H1 (cell line): ENCODE measurements at regions of chr2 and their contacts with region 1.

Region 1: GRCh38 chr2:121617042-121617599 is 32.1 kb downstream of the CLASP1 start:
- DNase-seq: no peak
- H3K4me3 ChIP-seq: no peak overlapping the region
- H3K27ac ChIP-seq: no peak overlapping the region
- H3K4me1 ChIP-seq: no peaks in the 10 kb centered on the region; a peak in 2 of 7 replicates
- H3K27me3 ChIP-seq: no peaks in the 10 kb centered on the region
- CTCF ChIP-seq: no peak
- EP300 ChIP-seq: no peak
- POLR2A ChIP-seq: no peak
- RAD21 ChIP-seq: no peak

Region 2: DNA sequence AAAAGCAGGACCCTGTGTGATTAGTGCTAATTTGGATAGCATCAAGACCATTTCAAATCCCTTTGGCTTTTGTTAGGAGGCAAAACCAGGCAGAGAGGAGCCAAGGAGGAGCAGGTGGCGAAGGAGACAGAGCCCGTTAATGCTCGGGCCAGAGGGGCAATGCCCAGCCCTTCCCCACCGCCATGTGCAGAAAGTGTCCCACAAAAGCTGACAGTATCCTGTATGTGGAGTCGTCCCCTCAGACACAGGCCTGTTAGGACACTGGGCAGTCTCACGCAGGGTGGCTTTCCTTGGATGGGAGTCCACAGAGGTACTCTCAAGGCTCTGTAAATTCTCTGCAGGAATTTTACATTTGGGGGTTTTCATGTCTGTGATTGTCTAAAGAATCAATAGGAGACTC is 287.3 kb before region 1 on chr2:
- CTCF ChIA-PET with region 1: no interaction called
- POLR2A ChIA-PET with region 1: no interaction called
- DNase-seq: no peak
- H3K4me3 ChIP-seq: no peak overlapping the region
- H3K27ac ChIP-seq: no peak overlapping the region
- H3K4me1 ChIP-seq: peaks cover 0 to 3% (median 1%) of the 10 kb centered on the region in 4 experiments; a peak in 2 of 7 replicates
- H3K27me3 ChIP-seq: no peaks in the 10 kb centered on the region
- CTCF ChIP-seq: no peak
- EP300 ChIP-seq: no peak
- POLR2A ChIP-seq: no peak
- RAD21 ChIP-seq: no peak

Region 3: GRCh38 chr2:121501031-121501430 is 116.1 kb before region 1 on chr2:
- CTCF ChIA-PET with region 1: no interaction called
- POLR2A ChIA-PET with region 1: no interaction called
- DNase-seq: no peak
- H3K4me3 ChIP-seq: no peak overlapping the region
- H3K27ac ChIP-seq: no peak overlapping the region
- H3K4me1 ChIP-seq: peaks cover 0 to 2% (median under 1%) of the 10 kb centered on the region in 4 experiments; a peak in 2 of 7 replicates
- H3K27me3 ChIP-seq: no peaks in the 10 kb centered on the region
- CTCF ChIP-seq: no peak
- EP300 ChIP-seq: no peak
- POLR2A ChIP-seq: no peak
- RAD21 ChIP-seq: no peak

Region 4: DNA sequence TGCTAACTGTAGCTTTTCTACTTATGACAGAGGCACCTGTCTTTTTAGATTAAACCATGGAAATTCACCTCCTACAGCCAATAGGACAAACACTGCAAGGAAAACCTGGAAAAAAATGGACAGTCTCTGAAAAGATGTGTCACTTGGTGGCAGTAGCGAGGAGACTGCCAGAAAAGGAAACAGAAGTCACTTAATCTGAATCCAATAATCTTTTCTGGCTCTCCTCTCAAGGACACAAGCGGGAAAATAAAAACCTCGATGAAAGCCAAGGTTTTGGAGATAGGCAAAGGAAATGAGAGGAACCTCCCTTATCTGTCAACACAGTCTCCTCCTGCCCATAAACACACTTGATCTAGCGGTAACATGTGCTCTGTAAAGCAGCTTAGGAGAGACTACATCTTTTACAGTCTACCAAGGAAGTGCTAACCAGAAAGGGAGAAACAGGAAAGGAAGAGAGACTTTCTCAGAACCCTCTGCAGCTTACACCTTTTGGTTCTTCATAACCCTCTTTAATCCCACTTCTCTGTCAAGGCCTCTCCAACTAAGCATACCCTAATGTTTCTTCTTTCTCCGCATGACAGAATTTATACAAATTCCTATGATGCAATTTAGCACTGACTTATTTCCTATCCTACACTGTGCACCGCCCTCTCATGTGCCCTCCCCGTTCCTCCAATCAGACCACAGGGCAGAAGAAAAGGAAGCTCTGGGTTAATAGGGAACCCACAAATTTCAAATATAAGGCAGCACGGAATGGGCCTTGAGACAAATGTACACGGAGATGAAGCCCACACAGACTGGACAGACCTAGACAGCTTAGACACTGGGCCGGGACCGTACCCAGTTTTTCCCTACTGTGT is 20.7 kb before region 1 on chr2:
- CTCF ChIA-PET with region 1: interaction called, 11 read pairs
- POLR2A ChIA-PET with region 1: interaction called, 3 read pairs
- DNase-seq: no peak
- H3K4me3 ChIP-seq: no peak overlapping the region
- H3K27ac ChIP-seq: no peak overlapping the region
- H3K4me1 ChIP-seq: peaks cover 0 to 3% (median 0%) of the 10 kb centered on the region in 4 experiments; a peak in 1 of 7 replicates
- H3K27me3 ChIP-seq: no peaks in the 10 kb centered on the region
- CTCF ChIP-seq: peak in 2 of 3 experiments; percentile 41 to 45; a peak in 2 of 4 replicates
- EP300 ChIP-seq: no peak
- POLR2A ChIP-seq: no peak
- RAD21 ChIP-seq: peak; percentile 45 to 55

Region 5: DNA sequence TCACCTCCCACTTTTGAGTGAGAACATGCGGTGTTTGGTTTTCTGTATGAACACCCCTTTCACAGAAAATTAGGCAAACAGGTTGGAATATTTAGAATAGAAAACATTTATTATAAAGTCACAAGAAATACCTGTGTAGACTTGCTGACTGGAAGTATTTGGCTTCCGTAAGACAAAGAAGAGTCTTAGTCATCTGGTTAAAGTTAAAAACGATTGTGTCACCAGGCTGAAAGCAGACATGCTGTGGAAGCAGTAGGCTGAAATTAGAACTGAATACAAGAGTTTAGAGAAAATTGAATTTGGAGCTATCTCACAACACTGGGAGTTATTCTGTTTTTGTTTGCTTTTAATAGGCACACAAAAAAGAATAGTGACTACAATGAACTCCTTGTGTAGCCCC is 48.4 kb after region 1 on chr2:
- CTCF ChIA-PET with region 1: no interaction called
- POLR2A ChIA-PET with region 1: no interaction called
- DNase-seq: no peak
- H3K4me3 ChIP-seq: no peak overlapping the region
- H3K27ac ChIP-seq: no peak overlapping the region
- H3K4me1 ChIP-seq: peaks cover 0 to 4% (median under 1%) of the 10 kb centered on the region in 4 experiments; a peak in 4 of 7 replicates
- H3K27me3 ChIP-seq: no peaks in the 10 kb centered on the region; a peak in 1 of 7 replicates
- CTCF ChIP-seq: no peak
- EP300 ChIP-seq: no peak
- POLR2A ChIP-seq: no peak
- RAD21 ChIP-seq: no peak

Region 6: DNA sequence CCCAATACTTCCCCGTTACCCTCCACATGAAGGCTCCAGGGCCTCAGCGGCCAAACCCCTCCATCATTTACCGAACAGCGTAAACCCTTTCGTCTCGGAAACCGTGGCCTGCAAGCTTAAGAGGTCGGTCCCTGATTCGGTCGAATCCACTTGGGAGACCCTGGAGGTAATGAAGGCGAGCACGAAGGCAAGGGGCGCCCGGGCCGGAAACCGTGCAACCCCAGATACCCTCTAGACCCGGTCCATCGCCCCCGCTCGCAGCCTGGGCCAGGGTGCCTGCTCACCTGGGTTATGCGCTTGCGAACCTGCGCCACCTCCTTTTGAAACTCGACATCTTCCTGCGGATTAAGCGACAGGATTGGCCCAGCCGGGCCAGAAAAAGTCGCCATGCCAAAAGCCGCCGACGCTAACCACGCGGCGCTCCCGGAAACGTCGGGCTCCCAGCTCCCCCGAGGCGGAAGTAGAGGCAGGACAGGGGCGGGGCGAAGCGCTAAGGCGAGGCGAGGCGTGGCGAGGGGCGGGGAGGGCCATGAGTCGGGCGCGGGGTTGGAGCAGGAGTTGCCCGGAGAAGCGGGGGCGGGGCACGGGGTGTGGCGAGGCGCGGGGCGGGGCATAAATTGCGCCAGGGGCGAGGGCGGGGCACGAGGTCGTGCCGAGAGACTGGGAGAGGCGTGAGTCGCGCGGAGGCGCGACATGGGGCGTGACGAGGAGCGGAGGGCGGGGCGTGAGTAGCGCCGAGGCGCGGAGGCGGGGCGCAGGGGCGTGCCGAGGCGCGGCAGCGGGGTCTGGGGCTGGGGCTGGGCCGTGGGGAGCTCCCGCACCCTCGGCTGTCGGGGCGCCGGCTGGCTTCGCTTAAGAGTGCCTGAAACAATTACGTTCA is 119.6 kb after region 1 on chr2 and contains the start of gene NIFK:
- CTCF ChIA-PET with region 1: no interaction called
- POLR2A ChIA-PET with region 1: no interaction called
- DNase-seq: peak; percentile 95 to 100
- H3K4me3 ChIP-seq: peak within 1 kb of the TSS; percentile 79 to 97 (median 96)
- H3K27ac ChIP-seq: peak within 1 kb of the TSS; percentile 12; the same call in 1 of the 2 replicates
- H3K4me1 ChIP-seq: peaks cover 0 to 5% (median 1%) of the 10 kb centered on the region in 4 experiments; a peak in 4 of 7 replicates
- H3K27me3 ChIP-seq: no peaks in the 10 kb centered on the region
- CTCF ChIP-seq: no peak
- EP300 ChIP-seq: no peak
- POLR2A ChIP-seq: peak; percentile 47 to 85
- RAD21 ChIP-seq: peak in 1 of 2 experiments; percentile 3; a peak in 1 of 4 replicates
- total RNA-seq, gene NIFK: 99.3 and 117 TPM in 2 replicates